Activated CD4-positive, alpha-beta memory T cell treated with anti-CD3 and anti-CD28 coated beads for 36 hours (primary cell): ENCODE measurements at regions of chr1 and their contacts with region 1.

Region 1: GRCh38 chr1:8848663-8849386 is 29.7 kb downstream of the ENO1 start:
- DNase-seq: peak; percentile 84
- H3K4me3 Mint-ChIP-seq: no peak overlapping the region
- H3K27ac Mint-ChIP-seq: no peak overlapping the region
- H3K4me1 Mint-ChIP-seq: no peaks in the 10 kb centered on the region
- H3K27me3 Mint-ChIP-seq: no peaks in the 10 kb centered on the region

Region 2: DNA sequence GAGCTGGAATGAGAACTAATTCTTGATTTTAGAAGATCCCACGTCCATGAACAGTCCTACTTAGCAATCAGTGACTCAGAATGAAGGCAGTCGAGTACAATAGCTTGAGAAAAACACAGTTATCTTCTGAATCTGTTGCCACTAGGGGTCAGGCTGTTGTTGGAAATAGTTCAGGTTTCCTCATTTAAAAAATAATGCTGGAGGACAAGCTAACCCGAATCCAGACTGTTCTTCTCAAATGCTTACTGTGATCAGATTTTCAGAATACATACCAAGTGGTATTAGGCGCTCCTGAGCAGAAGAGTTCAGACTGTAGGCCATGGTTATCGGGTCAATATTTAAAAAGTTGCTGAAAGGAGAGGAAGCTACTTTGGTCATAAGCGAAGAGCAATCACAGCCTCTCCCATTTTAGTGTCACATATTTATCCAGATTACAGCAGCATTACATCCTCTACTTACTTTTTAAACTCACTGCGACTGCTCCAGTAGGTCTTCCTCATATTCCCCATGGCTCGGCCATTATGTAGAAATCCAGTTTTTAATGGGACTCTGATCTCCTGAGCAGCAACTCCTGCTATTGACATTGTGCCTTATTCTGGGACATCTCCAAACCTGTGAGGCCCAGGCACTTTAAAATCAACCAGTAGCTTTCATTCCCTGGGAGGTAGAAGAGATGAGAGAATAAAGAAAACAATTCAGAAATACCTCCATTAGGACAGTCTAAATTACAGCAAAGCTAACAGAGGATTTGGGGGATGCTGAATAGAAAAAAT is 833.6 kb before region 1 on chr1:
- CTCF ChIA-PET with region 1: interaction called, 22 read pairs
- POLR2A ChIA-PET with region 1: no interaction called
- intact Hi-C with region 1: no loop called
- DNase-seq: peak; percentile 21
- H3K4me3 Mint-ChIP-seq: no peak overlapping the region
- H3K27ac Mint-ChIP-seq: no peak overlapping the region
- H3K4me1 Mint-ChIP-seq: peaks cover 2% of the 10 kb centered on the region
- H3K27me3 Mint-ChIP-seq: peaks cover 17% of the 10 kb centered on the region

Region 3: GRCh38 chr1:8031176-8031785 is 817.5 kb before region 1 on chr1:
- CTCF ChIA-PET with region 1: no interaction called
- POLR2A ChIA-PET with region 1: no interaction called
- intact Hi-C with region 1: no loop called
- DNase-seq: no peak
- H3K4me3 Mint-ChIP-seq: no peak overlapping the region
- H3K27ac Mint-ChIP-seq: no peak overlapping the region
- H3K4me1 Mint-ChIP-seq: peaks cover 5% of the 10 kb centered on the region
- H3K27me3 Mint-ChIP-seq: peaks cover 4% of the 10 kb centered on the region

Region 4: DNA sequence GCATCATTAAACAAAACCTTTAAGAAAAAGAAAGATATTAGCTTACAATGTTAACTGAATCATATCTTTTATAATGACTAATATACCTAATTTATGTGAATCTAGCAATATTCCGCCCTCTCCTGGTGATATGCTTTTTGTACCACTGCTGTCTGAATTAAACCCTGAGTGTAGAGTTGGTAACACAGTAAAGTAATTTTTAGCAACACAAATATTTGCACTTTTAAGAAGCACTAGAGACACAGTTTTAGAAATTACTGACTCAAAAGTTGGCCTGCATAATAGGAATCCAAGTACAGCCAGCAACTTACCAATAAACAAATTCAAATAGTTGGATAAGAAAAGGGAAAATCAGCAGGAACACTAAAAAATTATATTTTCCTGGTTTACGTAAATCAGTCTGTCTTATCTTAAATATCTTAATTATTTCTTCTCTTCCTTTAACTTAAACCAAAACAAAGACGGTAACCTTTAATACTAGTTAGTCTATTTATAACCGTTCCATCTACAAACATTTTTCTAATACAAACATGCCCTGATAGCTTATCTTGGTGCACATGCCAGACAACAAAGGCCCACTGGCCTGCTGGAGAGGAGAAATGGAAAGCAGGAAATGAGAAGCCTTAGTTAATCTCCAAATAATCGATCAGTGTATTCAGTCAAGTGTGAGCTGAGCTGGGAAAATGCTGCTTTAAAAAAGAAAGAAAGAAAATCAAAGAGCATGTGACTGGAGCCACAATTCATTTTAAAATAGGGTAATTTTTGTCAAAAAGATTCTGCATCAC is 277.4 kb before region 1 on chr1:
- CTCF ChIA-PET with region 1: interaction called, 18 read pairs
- POLR2A ChIA-PET with region 1: no interaction called
- intact Hi-C with region 1: no loop called
- DNase-seq: no peak
- H3K4me3 Mint-ChIP-seq: no peak overlapping the region
- H3K27ac Mint-ChIP-seq: no peak overlapping the region
- H3K4me1 Mint-ChIP-seq: no peaks in the 10 kb centered on the region
- H3K27me3 Mint-ChIP-seq: no peaks in the 10 kb centered on the region

Region 5: DNA sequence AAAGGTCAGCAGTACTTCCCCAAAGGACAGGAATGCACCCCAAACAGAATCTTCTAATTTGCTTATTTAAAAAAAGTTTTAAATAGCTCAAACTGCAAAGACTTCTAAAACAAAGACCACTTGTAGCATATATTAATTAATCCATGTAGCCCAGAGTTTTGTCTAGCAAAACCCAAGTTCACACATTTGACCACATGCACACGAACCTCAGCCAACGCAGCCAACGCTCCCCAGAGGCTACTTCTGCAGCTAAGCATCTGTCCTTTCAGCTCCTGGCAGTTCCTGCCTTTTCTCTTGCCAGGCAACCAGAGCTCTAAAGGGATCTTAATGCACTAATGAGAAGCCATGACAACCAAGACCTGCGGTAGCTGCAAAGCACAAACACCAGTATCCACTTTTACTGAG is 121.0 kb before region 1 on chr1:
- CTCF ChIA-PET with region 1: interaction called, 35 read pairs
- POLR2A ChIA-PET with region 1: no interaction called
- intact Hi-C with region 1: no loop called
- DNase-seq: no peak
- H3K4me3 Mint-ChIP-seq: no peak overlapping the region
- H3K27ac Mint-ChIP-seq: no peak overlapping the region
- H3K4me1 Mint-ChIP-seq: peaks cover 14% of the 10 kb centered on the region
- H3K27me3 Mint-ChIP-seq: no peaks in the 10 kb centered on the region

Region 6: GRCh38 chr1:8746554-8746953 is 102.3 kb before region 1 on chr1:
- CTCF ChIA-PET with region 1: interaction called, 19 read pairs
- POLR2A ChIA-PET with region 1: no interaction called
- intact Hi-C with region 1: no loop called
- DNase-seq: no peak
- H3K4me3 Mint-ChIP-seq: no peak overlapping the region
- H3K27ac Mint-ChIP-seq: no peak overlapping the region
- H3K4me1 Mint-ChIP-seq: peaks cover 4% of the 10 kb centered on the region
- H3K27me3 Mint-ChIP-seq: no peaks in the 10 kb centered on the region

Region 7: GRCh38 chr1:8835941-8836643 is 12.7 kb before region 1 on chr1:
- CTCF ChIA-PET with region 1: interaction called, 49 read pairs
- POLR2A ChIA-PET with region 1: no interaction called
- intact Hi-C with region 1: no loop called
- DNase-seq: no peak
- H3K4me3 Mint-ChIP-seq: no peak overlapping the region
- H3K27ac Mint-ChIP-seq: no peak overlapping the region
- H3K4me1 Mint-ChIP-seq: no peaks in the 10 kb centered on the region
- H3K27me3 Mint-ChIP-seq: no peaks in the 10 kb centered on the region